ENCODE measurements at regions of chr19 and their contacts with region 1.

Region 1: DNA sequence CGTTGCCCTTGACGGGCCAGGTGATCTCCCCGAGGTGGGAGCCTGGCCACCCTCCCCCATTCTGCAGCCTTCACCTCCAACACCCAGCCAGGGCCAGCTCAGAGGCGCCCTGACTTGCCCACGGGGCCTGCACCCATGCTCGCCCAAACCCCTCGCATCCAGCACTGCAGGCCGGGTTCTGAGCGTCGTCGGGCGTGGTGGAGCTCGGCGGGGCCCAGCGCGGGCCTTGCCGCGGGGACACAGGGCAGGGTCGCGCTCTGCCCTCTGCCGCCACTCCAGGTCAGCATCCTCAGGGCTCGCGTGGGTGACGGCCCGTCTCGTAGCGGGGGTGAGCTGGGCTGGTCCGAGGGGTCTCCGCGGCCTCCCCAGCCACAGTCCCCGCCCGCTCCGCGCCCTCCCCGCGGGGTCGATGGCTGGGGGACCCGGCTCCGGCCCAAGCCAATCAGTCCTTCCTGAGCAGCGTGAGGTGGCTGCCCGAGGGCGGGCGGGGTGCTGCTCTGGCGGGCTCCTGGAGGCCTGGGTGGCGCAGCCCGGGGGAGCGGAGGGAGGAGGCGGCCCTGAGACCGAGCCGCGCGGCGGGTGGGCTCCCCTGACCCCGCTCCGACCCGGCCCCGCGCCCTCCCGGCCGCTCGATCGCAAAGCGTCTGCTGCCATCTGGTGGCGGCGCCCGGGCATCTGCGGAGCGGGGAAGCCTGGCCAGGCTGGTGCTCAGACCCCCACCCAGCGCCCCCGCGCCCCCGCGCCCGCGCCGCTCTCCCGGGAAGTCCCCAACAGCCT is 61.4 kb downstream of the CCNE1 start:
- DNase-seq: peak; percentile 25 to 66 (median 57)
- H3K4me3 ChIP-seq: no peak overlapping the region
- H3K27ac ChIP-seq: no peak overlapping the region
- H3K4me1 ChIP-seq: peaks cover 2% of the 10 kb centered on the region
- H3K27me3 ChIP-seq: no peaks in the 10 kb centered on the region
- CTCF ChIP-seq: peak; percentile 71 to 74 (median 74)
- EP300 ChIP-seq: no peak
- POLR2A ChIP-seq: no peak

Region 2: GRCh38 chr19:29610563-29611271 is 262.5 kb before region 1 on chr19:
- intact Hi-C with region 1: loop called in 1 of 4 experiments (anchors 10 kb)
- DNase-seq: peak; percentile 77 to 85 (median 85)
- H3K4me3 ChIP-seq: no peak overlapping the region
- H3K27ac ChIP-seq: no peak overlapping the region
- H3K4me1 ChIP-seq: no peaks in the 10 kb centered on the region
- H3K27me3 ChIP-seq: no peaks in the 10 kb centered on the region
- CTCF ChIP-seq: peak; percentile 71 to 82 (median 73)
- EP300 ChIP-seq: no peak
- POLR2A ChIP-seq: no peak

Region 3: GRCh38 chr19:29724746-29725145 is 148.5 kb before region 1 on chr19:
- intact Hi-C with region 1: loop called in 1 of 4 experiments (anchors 5 kb)
- DNase-seq: no peak
- H3K4me3 ChIP-seq: no peak overlapping the region
- H3K27ac ChIP-seq: no peak overlapping the region
- H3K4me1 ChIP-seq: peaks cover 2% of the 10 kb centered on the region
- H3K27me3 ChIP-seq: no peaks in the 10 kb centered on the region
- CTCF ChIP-seq: no peak
- EP300 ChIP-seq: no peak
- POLR2A ChIP-seq: no peak

Region 4: GRCh38 chr19:29735800-29736199 is 137.4 kb before region 1 on chr19:
- intact Hi-C with region 1: loop called in 2 of 4 experiments (anchors 5 to 10 kb)
- DNase-seq: no peak
- H3K4me3 ChIP-seq: no peak overlapping the region
- H3K27ac ChIP-seq: no peak overlapping the region
- H3K4me1 ChIP-seq: no peaks in the 10 kb centered on the region
- H3K27me3 ChIP-seq: no peaks in the 10 kb centered on the region
- CTCF ChIP-seq: no peak
- EP300 ChIP-seq: no peak
- POLR2A ChIP-seq: no peak

Region 5: DNA sequence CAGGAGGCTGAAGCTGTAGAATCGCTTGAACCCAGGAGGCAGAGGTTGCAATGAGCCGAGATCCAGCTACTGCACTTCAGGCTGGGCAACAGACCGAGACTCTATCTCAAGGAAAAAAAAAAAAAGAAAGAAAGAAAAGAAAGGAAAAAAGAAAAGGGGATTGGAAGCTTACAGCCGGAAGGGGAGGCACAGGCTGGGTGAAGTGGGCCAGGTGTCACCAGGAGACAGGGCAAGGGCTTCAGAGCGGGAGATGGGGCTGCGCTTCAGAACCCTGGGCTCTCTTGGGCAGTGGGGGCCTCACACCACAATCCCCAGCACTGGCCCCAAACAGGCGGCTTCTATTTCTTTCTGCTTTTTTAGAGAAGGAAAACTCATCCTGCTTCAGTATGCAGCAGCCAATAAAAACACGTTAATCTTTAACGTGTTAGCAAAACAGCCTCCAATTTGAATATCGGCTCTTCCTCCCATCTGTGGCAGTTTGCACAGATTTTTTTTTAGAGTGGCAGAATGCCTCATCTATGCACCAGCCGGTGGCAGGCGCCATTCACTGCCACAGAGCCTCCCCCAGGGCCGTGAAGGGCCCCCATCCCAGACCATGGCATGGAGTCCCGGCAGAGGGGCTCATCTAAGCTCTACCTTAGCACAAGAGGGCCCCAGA is 111.5 kb before region 1 on chr19:
- intact Hi-C with region 1: loop called in 1 of 4 experiments (anchors 10 kb)
- DNase-seq: no peak
- H3K4me3 ChIP-seq: no peak overlapping the region
- H3K27ac ChIP-seq: no peak overlapping the region
- H3K4me1 ChIP-seq: no peaks in the 10 kb centered on the region
- H3K27me3 ChIP-seq: no peaks in the 10 kb centered on the region
- CTCF ChIP-seq: no peak
- EP300 ChIP-seq: no peak
- POLR2A ChIP-seq: no peak

Region 6: DNA sequence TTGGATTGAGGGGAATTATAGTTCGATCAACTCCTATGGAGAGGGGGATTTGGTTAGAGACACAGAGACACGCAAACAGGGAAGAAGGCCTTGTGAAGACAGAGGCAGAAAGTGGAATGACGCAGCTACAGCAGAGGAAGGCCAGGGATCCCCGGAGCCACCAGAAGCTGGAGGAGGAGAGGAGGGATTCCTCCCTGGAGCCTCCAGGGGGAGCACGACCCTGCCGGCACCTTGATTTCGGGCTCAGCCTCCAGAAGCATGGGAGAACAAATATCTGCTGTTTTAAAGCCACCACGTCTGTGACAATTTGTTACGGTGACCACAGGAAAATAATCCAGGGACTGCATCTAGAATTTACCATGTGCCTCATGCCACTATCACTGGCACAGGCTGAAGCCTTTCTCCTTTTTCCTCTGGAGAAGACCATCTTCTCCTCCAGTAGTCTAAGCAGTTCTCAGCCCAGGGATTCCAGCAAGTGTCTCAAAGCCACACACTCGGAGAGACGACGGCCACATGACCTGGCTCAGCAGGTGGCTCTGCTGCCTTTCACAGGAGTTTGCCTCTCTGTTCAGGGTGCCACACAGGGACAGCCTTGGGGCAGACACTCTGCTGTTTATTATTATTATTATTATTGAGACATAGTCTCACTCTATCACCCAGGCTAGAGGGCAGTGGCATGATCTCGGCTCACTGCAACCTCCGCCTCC is 101.4 kb before region 1 on chr19:
- intact Hi-C with region 1: loop called (anchors 5 to 10 kb)
- DNase-seq: peak in 4 of 5 donors; percentile 15 to 59 (median 29)
- H3K4me3 ChIP-seq: no peak overlapping the region
- H3K27ac ChIP-seq: no peak overlapping the region
- H3K4me1 ChIP-seq: no peaks in the 10 kb centered on the region
- H3K27me3 ChIP-seq: no peaks in the 10 kb centered on the region
- CTCF ChIP-seq: no peak
- EP300 ChIP-seq: no peak
- POLR2A ChIP-seq: no peak

Region 7: GRCh38 chr19:29779921-29780320 is 93.3 kb before region 1 on chr19:
- intact Hi-C with region 1: loop called in 1 of 4 experiments (anchors 5 kb)
- DNase-seq: no peak
- H3K4me3 ChIP-seq: no peak overlapping the region
- H3K27ac ChIP-seq: no peak overlapping the region
- H3K4me1 ChIP-seq: no peaks in the 10 kb centered on the region
- H3K27me3 ChIP-seq: no peaks in the 10 kb centered on the region
- CTCF ChIP-seq: no peak
- EP300 ChIP-seq: no peak
- POLR2A ChIP-seq: no peak

Region 8: GRCh38 chr19:29893606-29894284 is 20.5 kb after region 1 on chr19:
- intact Hi-C with region 1: no loop called
- DNase-seq: no peak
- H3K4me3 ChIP-seq: no peak overlapping the region
- H3K27ac ChIP-seq: no peak overlapping the region
- H3K4me1 ChIP-seq: no peaks in the 10 kb centered on the region
- H3K27me3 ChIP-seq: no peaks in the 10 kb centered on the region
- CTCF ChIP-seq: no peak
- EP300 ChIP-seq: no peak
- POLR2A ChIP-seq: no peak